ENCODE measurements at regions of chr2 and their contacts with region 1.

Region 1: GRCh38 chr2:32864334-32865111 is 82.2 kb upstream of the LTBP1 start:
- DNase-seq: peak; percentile 93
- ATAC-seq: peak; percentile 90
- H3K4me3 ChIP-seq: no peak overlapping the region; the same call in 1 of the 2 replicates
- H3K27ac ChIP-seq: peak overlapping the region; percentile 94
- H3K4me1 ChIP-seq: peaks cover 16% of the 10 kb centered on the region
- H3K27me3 ChIP-seq: no peaks in the 10 kb centered on the region
- CTCF ChIP-seq: no peak
- POLR2A ChIP-seq: no peak
- RAD21 ChIP-seq: no peak

Region 2: GRCh38 chr2:32798829-32799228 is 65.7 kb before region 1 on chr2:
- CTCF ChIA-PET with region 1: no interaction called
- POLR2A ChIA-PET with region 1: no interaction called
- dilution Hi-C with region 1: no loop called
- in situ Hi-C with region 1: no loop called
- intact Hi-C with region 1: loop called (anchors 5 kb)
- DNase-seq: peak; percentile 82
- ATAC-seq: peak; percentile 81
- H3K4me3 ChIP-seq: no peak overlapping the region
- H3K27ac ChIP-seq: no peak overlapping the region
- H3K4me1 ChIP-seq: peaks cover 3% of the 10 kb centered on the region; the same call in 1 of the 2 replicates
- H3K27me3 ChIP-seq: no peaks in the 10 kb centered on the region
- CTCF ChIP-seq: no peak
- POLR2A ChIP-seq: no peak
- RAD21 ChIP-seq: no peak

Region 3: DNA sequence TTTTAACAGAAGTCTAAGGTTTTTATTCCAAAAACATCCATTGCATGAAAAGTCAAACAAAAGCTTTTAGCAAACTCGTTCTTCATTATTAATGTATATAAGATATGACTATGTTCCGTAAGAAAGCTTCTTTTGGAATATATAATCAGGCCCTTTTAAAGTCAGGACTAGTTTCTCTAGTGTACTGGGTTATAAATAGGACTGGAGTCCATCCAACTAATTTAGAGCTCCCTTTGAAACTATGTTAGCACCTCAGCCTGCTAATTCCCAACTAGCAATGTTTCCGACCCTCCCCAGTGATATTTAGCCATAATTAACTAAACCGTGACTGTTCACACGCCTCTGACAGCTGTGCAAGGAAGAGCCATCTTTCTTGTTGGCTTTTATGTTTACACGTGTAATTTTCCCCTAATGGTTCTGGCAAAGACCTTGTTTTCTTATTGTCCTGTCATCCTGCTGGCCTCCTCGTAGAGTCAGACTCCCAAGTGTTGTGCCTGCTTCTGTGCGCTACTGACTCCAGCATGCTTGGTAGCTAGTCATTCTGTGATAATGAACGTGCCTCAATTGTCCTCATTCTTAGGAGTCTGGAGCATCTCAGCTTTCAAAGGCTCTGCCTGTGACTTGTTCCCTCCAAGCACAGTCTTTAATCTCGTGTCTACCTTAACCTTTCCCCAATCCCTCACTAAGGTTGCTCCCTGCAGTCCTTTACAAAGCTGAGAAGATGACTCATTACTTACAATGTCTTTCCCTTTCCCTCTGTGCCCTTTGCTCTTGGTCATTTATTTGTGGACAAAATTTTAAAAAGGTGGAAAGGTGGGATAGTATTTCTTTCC is 439.7 kb after region 1 on chr2:
- CTCF ChIA-PET with region 1: no interaction called
- POLR2A ChIA-PET with region 1: no interaction called
- dilution Hi-C with region 1: no loop called
- in situ Hi-C with region 1: no loop called
- intact Hi-C with region 1: no loop called
- DNase-seq: no peak
- ATAC-seq: no peak
- H3K4me3 ChIP-seq: no peak overlapping the region
- H3K27ac ChIP-seq: no peak overlapping the region
- H3K4me1 ChIP-seq: 0 out of 2 replicates have a peak, but pooled peaks cover 1% of the 10 kb centered on the region
- H3K27me3 ChIP-seq: no peaks in the 10 kb centered on the region
- CTCF ChIP-seq: no peak
- POLR2A ChIP-seq: no peak
- RAD21 ChIP-seq: no peak